ENCODE measurements at regions of chr21 and their contacts with region 1.

Region 1: GRCh38 chr21:32653311-32653901 is 41.2 kb upstream of the CFAP298 start:
- DNase-seq: peak; percentile 59
- H3K4me3 ChIP-seq: no peak overlapping the region
- H3K27ac ChIP-seq: no peak overlapping the region
- H3K4me1 ChIP-seq: no peaks in the 10 kb centered on the region
- H3K27me3 ChIP-seq: no peaks in the 10 kb centered on the region
- CTCF ChIP-seq: peak; percentile 54 to 69
- POLR2A ChIP-seq: no peak

Region 2: DNA sequence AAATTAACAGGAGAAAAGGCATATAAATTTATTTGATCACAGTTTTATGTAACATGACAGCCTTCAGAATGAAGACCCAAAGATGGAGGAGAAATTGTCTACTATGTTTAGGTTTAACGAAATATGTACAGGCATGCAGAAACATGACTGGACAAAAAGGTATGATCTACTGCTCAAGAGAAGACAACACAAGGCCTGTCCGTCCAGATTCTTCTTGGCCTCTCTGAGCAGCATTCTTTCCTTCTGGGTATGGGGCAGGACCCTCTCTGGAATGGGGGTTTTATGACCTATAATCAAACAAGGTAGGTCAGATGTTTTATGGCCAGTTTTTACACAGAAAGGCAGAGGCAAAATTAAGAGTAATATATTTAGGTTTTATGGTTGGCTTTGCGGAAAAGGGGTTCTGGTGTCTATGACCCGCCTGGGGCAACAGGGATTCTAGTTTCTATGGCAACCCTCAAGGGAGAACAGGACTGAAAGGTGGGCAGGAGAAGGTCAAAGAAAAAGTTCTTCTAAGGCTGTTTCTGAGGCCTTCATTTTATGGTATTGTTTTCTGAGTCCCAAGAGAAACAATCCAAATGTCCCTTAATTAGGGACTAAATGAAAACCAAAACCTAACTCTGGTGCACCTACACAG is 88.0 kb after region 1 on chr21:
- CTCF ChIA-PET with region 1: interaction called, 3 read pairs
- POLR2A ChIA-PET with region 1: interaction called, 3 read pairs
- dilution Hi-C with region 1: no loop called
- intact Hi-C with region 1: loop called (anchors 5 kb)
- DNase-seq: no peak
- H3K4me3 ChIP-seq: no peak overlapping the region
- H3K27ac ChIP-seq: no peak overlapping the region
- H3K4me1 ChIP-seq: no peaks in the 10 kb centered on the region
- H3K27me3 ChIP-seq: no peaks in the 10 kb centered on the region
- CTCF ChIP-seq: no peak
- POLR2A ChIP-seq: no peak

Region 3: GRCh38 chr21:32914424-32915039 is 261.1 kb after region 1 on chr21:
- CTCF ChIA-PET with region 1: no interaction called
- POLR2A ChIA-PET with region 1: no interaction called
- dilution Hi-C with region 1: no loop called
- intact Hi-C with region 1: loop called (anchors 5 kb)
- DNase-seq: no peak
- H3K4me3 ChIP-seq: no peak overlapping the region
- H3K27ac ChIP-seq: no peak overlapping the region
- H3K4me1 ChIP-seq: no peaks in the 10 kb centered on the region
- H3K27me3 ChIP-seq: peaks cover 9 to 13% of the 10 kb centered on the region in 2 experiments
- CTCF ChIP-seq: no peak
- POLR2A ChIP-seq: no peak